ENCODE measurements at regions of chr17 and their contacts with region 1.

Region 1: GRCh38 chr17:1108861-1109605 is 70.7 kb downstream of the ABR start:
- DNase-seq: peak; percentile 62
- H3K4me3 ChIP-seq: peak overlapping the region; percentile 63 to 75 (median 74)
- H3K27ac ChIP-seq: peak overlapping the region; percentile 54
- H3K4me1 ChIP-seq: peaks cover 42% of the 10 kb centered on the region
- H3K27me3 ChIP-seq: no peaks in the 10 kb centered on the region
- CTCF ChIP-seq: no peak

Region 2: GRCh38 chr17:1078831-1079561 is 30.0 kb before region 1 on chr17:
- CTCF ChIA-PET with region 1: no interaction called
- dilution Hi-C with region 1: loop called (anchors 5 kb)
- in situ Hi-C with region 1: no loop called
- intact Hi-C with region 1: no loop called
- DNase-seq: no peak
- H3K4me3 ChIP-seq: no peak overlapping the region
- H3K27ac ChIP-seq: no peak overlapping the region
- H3K4me1 ChIP-seq: peaks cover 18% of the 10 kb centered on the region
- H3K27me3 ChIP-seq: no peaks in the 10 kb centered on the region
- CTCF ChIP-seq: no peak

Region 3: GRCh38 chr17:1091900-1092299 is 17.1 kb before region 1 on chr17:
- CTCF ChIA-PET with region 1: no interaction called
- dilution Hi-C with region 1: no loop called
- in situ Hi-C with region 1: no loop called
- intact Hi-C with region 1: loop called (anchors 1 kb)
- DNase-seq: peak; percentile 88
- H3K4me3 ChIP-seq: peak overlapping the region in 1 of 3 experiments; percentile 14
- H3K27ac ChIP-seq: peak overlapping the region; percentile 38
- H3K4me1 ChIP-seq: peaks cover 38% of the 10 kb centered on the region
- H3K27me3 ChIP-seq: no peaks in the 10 kb centered on the region
- CTCF ChIP-seq: no peak

Region 4: GRCh38 chr17:1241929-1242328 is 132.9 kb after region 1 on chr17:
- CTCF ChIA-PET with region 1: no interaction called
- dilution Hi-C with region 1: no loop called
- in situ Hi-C with region 1: no loop called
- intact Hi-C with region 1: no loop called
- DNase-seq: no peak
- H3K4me3 ChIP-seq: no peak overlapping the region
- H3K27ac ChIP-seq: no peak overlapping the region
- H3K4me1 ChIP-seq: no peaks in the 10 kb centered on the region
- H3K27me3 ChIP-seq: no peaks in the 10 kb centered on the region
- CTCF ChIP-seq: no peak

Measured in mammary epithelial cell (primary cell).